Activated B cell treated with CpG ODN at 0.5 μM for 24 hours (primary cell): ENCODE measurements at regions of chr14 and their contacts with region 1.

Region 1: DNA sequence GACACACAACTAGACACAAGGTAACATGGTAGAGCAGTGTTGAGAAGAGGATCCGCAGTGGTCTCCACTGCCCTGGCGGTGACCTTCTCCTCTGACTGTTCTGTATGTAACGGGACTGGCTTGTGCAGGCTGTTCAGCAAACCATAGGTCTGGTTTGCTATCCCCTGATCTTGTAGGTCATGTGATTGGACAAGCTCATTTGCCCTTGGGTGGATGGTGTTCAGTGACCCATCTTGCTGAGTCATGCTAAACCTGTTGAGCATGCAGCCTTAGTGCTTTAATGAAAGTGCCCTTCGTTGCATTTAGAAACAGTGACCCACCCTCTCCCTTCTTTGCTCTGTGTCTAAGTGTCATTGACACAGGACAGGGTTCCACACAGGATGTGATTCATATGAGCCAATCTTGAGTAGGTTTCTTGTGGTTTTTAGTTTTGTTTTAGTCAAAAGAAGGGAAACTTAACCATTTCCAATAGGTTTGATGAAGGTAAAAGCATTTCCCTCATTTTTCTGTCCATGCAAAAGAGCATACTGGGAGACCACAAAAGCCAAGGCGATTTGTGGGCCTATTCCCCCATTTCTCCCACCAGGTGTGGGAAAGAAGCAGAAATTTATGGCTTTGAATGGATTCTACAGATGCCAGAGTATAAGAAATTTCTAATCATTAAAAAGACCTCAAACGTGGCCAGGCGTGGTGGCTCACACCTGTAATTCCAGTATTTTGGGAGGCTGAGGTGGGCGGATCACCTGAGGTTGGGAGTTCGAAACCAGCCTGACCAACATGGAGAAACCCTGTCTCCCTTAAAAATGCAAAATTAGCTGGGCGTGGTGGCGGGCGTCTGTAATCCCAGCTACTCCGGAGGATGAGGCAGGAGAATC is 32.6 kb upstream of the HIF1A start:
- DNase-seq: peak; percentile 26
- ATAC-seq: peak; percentile 78
- H3K4me3 Mint-ChIP-seq: peak overlapping the region; percentile 78
- H3K27ac Mint-ChIP-seq: peak overlapping the region; percentile 91
- H3K4me1 Mint-ChIP-seq: peaks cover 57% of the 10 kb centered on the region
- H3K27me3 Mint-ChIP-seq: no peaks in the 10 kb centered on the region
- CTCF ChIP-seq: no peak

Region 2: DNA sequence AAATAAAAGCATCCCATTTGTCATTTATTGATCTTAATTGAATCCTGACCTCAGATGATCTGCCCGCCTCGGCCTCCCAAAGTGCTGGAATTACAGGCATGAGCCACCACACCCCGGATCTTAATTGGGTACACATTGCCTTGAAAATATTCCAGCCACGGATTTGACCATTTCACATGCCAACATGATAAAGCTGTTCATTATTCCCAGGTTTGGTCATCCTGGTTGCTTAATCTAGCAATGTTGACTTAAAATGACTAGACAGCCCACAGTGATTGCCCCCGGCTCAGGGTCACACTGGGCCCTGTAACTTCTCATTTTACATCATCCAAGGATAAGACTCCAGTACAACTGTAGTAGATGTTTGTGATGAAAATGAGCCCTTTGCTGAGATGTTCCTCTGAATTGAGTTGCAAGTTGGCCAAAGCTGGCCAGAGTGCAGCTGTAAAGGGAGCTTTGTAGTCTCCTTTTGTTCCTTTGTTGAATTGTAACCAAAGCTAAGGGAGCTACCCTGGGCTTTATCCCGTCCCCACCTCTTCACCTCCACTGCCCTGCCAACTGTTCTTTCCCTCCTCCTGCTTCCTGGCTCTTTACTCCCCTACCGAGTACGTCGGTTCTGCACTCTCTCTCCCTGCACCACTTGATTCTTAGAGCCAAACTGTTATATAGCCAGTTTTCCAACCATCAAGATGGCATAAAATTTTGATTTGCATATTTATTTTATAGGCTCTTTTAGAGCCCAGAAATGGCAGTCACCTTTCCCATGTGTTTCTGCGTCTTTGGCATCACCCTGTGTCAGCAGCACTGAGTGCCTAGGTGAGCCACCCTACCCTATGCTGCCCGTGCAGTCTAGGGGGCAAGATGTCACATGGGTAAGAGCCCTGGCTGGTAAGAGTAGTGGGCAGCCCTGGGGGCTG is 108.7 kb before region 1 on chr14:
- CTCF ChIA-PET with region 1: no interaction called
- POLR2A ChIA-PET with region 1: interaction called, 26 read pairs
- intact Hi-C with region 1: loop called (anchors 1 kb)
- DNase-seq: no peak
- ATAC-seq: no peak
- H3K4me3 Mint-ChIP-seq: peak overlapping the region; percentile 75
- H3K27ac Mint-ChIP-seq: peak overlapping the region; percentile 97
- H3K4me1 Mint-ChIP-seq: peaks cover 67% of the 10 kb centered on the region
- H3K27me3 Mint-ChIP-seq: no peaks in the 10 kb centered on the region
- CTCF ChIP-seq: no peak

Region 3: DNA sequence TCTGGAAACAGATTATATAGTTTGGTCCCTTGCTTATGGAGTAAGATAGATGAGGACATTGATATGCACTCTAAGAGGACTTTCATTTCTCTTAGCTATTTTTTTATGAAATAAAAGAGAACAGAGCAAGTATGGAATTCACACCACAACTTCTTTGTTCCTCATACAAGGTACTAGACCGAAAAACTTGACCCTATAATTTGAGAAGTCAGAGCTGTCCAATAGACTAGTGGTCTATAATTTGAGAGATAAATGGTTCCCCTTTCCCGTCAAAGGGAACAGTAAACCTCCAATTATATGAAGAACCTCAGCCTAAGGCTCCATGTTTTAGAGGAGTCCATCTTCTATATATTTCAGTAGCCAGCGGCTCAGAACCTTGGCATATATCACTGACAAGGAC is 25.9 kb before region 1 on chr14:
- CTCF ChIA-PET with region 1: no interaction called
- POLR2A ChIA-PET with region 1: interaction called, 6 read pairs
- intact Hi-C with region 1: loop called (anchors 1 kb)
- DNase-seq: no peak
- ATAC-seq: peak; percentile 74
- H3K4me3 Mint-ChIP-seq: peak overlapping the region; percentile 56
- H3K27ac Mint-ChIP-seq: peak overlapping the region; percentile 69
- H3K4me1 Mint-ChIP-seq: peaks cover 25% of the 10 kb centered on the region
- H3K27me3 Mint-ChIP-seq: no peaks in the 10 kb centered on the region
- CTCF ChIP-seq: no peak

Region 4: DNA sequence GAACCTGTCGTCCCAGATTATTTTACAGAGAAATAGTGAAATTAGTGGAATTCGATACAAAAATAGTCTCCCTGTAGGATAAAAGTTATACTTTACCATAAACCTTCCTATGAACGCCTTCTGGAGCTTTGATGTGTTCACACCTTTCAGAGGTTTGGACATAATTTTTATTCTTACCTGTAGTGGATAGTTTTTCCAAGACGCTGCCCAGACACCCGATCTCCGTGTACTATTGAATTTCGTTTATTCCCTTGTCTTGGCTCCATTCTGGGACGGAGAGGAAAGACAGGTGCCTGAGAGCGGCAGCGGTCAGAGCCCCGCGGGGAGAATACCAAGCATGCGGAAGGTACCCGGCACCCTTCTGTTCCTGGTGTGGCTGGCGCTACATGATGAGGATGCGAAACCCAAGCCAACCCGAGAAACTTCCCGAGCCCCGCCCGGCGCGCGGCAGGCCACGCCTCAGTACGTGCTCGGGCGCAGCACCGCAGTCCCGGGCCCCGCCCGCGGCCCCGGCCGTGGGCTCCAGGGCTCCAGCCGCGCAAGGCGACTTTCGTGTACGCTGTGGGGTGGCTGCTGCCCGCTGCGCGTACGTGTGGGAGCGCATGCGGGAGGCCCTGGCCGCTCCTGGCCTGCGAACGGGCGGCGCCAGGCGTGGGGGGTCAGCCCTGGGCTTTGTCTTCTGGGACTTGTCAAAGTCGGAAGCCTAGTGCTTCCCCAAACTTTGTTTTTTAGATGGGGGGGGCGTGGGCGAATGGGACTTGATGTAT is 88.2 kb after region 1 on chr14:
- CTCF ChIA-PET with region 1: no interaction called
- POLR2A ChIA-PET with region 1: no interaction called
- intact Hi-C with region 1: loop called (anchors 1 kb)
- DNase-seq: peak; percentile 81
- ATAC-seq: peak; percentile 95
- H3K4me3 Mint-ChIP-seq: peak overlapping the region; percentile 87
- H3K27ac Mint-ChIP-seq: peak overlapping the region; percentile 90
- H3K4me1 Mint-ChIP-seq: peaks cover 41% of the 10 kb centered on the region
- H3K27me3 Mint-ChIP-seq: no peaks in the 10 kb centered on the region
- CTCF ChIP-seq: no peak

Region 5: DNA sequence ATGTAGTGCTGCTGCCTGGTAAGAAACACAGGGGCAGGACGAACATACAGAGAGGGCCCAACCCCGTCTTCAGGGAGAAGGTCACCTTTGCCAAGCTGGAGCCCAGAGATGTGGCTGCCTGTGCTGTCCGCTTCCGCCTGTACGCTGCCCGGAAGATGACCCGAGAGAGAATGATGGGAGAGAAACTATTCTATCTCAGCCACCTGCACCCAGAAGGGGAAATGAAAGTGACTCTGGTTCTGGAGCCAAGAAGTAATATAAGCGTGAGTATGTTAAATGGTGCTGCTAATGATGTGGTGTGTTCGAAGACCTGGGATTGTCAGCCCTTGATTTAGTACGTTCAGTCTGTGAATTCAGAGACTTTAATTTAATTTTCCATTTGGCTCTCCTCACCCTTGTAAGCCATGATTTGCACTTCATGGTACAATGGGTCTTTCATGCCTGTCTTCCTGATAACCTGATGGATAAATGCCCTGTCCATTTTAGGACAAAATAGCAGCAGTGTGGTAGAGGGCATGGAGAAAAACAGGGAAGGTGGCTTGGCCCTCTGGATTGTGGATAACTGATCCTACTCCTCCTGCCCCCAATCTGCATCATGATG is 418.4 kb after region 1 on chr14:
- CTCF ChIA-PET with region 1: no interaction called
- POLR2A ChIA-PET with region 1: no interaction called
- intact Hi-C with region 1: loop called (anchors 5 kb)
- DNase-seq: peak; percentile 44
- ATAC-seq: peak; percentile 69
- H3K4me3 Mint-ChIP-seq: peak overlapping the region; percentile 78
- H3K27ac Mint-ChIP-seq: peak overlapping the region; percentile 94
- H3K4me1 Mint-ChIP-seq: peaks cover 80% of the 10 kb centered on the region
- H3K27me3 Mint-ChIP-seq: no peaks in the 10 kb centered on the region
- CTCF ChIP-seq: no peak